B cell (primary cell): ENCODE measurements at regions of chr16 and their contacts with region 1.

Region 1: DNA sequence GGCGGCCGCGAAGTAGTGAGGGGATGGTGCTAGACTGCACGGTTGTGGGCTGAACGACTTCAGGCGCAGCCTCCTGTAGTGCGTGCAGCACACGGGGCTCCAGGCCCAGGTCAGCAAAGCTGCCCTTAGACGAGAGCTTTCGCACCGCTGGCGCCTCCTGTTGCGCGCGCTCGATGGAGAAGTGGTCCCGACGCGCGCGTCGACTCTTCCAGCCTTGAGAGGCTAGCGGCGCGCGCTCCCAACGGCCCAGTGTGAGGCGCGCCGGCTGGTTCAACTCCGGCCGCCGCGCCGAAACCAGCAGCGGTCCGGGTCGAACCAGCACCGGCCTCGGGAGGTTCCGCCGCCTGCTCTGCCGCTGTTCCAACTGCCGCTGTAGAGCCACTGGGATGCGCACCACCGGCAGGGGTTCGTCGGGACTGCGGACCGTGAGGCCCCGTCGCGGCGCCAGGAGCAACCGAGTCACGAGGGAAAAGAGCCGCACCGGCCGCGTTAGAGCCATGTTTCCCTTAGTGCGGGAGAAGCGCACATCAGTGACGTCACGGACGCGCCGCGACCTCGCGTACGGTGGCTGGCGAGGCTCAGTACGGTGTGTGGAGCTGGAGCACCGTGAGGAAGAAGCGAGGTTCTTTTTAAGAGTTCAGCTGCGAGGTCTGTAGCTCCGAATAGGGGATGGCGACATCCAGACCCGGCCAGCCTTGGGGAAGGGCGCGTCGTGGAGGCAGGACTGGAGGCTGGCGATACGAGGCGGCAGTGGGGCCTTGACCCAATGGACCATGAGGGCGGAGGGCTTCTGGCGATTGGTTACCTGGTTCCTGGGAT is at the starts of genes DDX28 and DUS2:
- DNase-seq: peak; percentile 96
- ATAC-seq: peak; percentile 94
- H3K4me3 ChIP-seq: peak within 1 kb of the TSS; percentile 74 to 98 (median 90)
- H3K4me3 Mint-ChIP-seq: peak within 1 kb of the TSS; percentile 96
- H3K27ac ChIP-seq: peak within 1 kb of the TSS; percentile 72 to 79
- H3K27ac Mint-ChIP-seq: peak within 1 kb of the TSS; percentile 99
- H3K4me1 ChIP-seq: peaks cover 23 to 26% of the 10 kb centered on the region in 2 donors
- H3K4me1 Mint-ChIP-seq: peaks cover 27% of the 10 kb centered on the region
- H3K27me3 ChIP-seq: no peaks in the 10 kb centered on the region
- H3K27me3 Mint-ChIP-seq: no peaks in the 10 kb centered on the region
- CTCF ChIP-seq: no peak
- total RNA-seq, gene DDX28: 19.2 and 20.2 TPM in 2 replicates
- total RNA-seq, gene DUS2: 61.1 and 69.1 TPM in 2 replicates

Region 2: DNA sequence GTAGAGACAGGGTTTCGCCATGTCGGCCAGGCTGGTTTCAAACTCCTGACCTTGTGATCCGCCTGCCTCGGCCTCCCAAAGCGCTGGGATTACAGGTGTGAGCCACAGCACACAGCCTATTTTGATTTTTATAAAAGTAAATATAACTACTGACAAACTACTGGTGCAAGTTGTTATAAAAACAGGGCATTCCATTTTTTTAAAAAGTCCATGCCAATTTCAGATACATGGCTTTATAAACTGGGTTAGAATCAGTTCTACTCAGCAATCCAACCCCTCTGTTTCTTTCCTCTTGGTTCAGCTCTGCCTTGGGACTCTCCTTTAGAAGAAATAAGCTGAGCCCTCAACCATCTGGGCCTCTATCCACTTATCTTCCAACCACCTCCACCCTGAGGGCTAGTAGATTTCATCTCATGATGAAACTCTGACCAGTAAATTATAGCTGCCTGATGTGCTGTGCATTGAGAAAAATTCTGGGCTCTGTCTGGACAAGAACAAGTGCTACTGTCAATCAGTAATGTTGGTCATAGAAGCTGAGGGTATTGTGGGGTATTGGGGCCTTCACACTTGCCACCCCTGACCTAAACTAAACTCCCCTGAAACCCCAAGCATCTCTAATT is 226.7 kb before region 1 on chr16:
- CTCF ChIA-PET with region 1: no interaction called
- POLR2A ChIA-PET with region 1: no interaction called
- intact Hi-C with region 1: no loop called
- DNase-seq: no peak
- ATAC-seq: no peak
- H3K4me3 ChIP-seq: no peak overlapping the region
- H3K4me3 Mint-ChIP-seq: no peak overlapping the region
- H3K27ac ChIP-seq: no peak overlapping the region
- H3K27ac Mint-ChIP-seq: peak overlapping the region; percentile 22
- H3K4me1 ChIP-seq: peaks cover 16 to 17% of the 10 kb centered on the region in 2 donors
- H3K4me1 Mint-ChIP-seq: peaks cover 43% of the 10 kb centered on the region
- H3K27me3 ChIP-seq: no peaks in the 10 kb centered on the region
- H3K27me3 Mint-ChIP-seq: no peaks in the 10 kb centered on the region
- CTCF ChIP-seq: no peak

Region 3: GRCh38 chr16:67892899-67893742 is 129.8 kb before region 1 on chr16 and contains the start of gene PSKH1:
- CTCF ChIA-PET with region 1: no interaction called
- POLR2A ChIA-PET with region 1: no interaction called
- intact Hi-C with region 1: loop called (anchors 1 kb)
- DNase-seq: peak; percentile 95
- ATAC-seq: peak; percentile 99
- H3K4me3 ChIP-seq: peak within 1 kb of the TSS; percentile 61 to 92 (median 76)
- H3K4me3 Mint-ChIP-seq: peak within 1 kb of the TSS; percentile 90
- H3K27ac ChIP-seq: peak within 1 kb of the TSS; percentile 77 to 95
- H3K27ac Mint-ChIP-seq: peak within 1 kb of the TSS; percentile 85
- H3K4me1 ChIP-seq: peaks cover 16 to 18% of the 10 kb centered on the region in 2 donors
- H3K4me1 Mint-ChIP-seq: peaks cover 31% of the 10 kb centered on the region
- H3K27me3 ChIP-seq: no peaks in the 10 kb centered on the region
- H3K27me3 Mint-ChIP-seq: no peaks in the 10 kb centered on the region
- CTCF ChIP-seq: no peak
- total RNA-seq, gene PSKH1: 29.1 TPM in 2 replicates

Region 4: DNA sequence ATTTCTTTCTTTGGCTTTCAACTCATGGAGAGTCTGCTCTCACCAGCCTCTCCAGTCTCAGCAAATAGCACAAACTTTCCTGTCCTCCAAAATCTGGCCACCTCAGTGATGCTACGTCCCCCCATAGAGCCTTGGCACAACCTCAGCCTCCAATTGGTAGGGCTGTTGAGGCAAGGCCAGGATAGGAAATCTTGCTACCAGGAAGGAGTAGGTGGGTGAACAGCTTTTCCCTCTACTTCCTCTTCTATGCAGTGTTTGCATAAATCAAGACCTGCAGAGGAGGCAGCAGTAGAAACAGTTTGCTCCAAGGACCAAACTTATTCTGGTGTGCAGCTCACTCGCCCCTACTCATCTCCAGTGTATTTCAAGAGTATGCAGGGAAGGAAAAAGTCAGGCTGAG is 22.9 kb before region 1 on chr16:
- CTCF ChIA-PET with region 1: interaction called, 19 read pairs
- POLR2A ChIA-PET with region 1: interaction called, 37 read pairs
- intact Hi-C with region 1: no loop called
- DNase-seq: peak; percentile 60
- ATAC-seq: peak; percentile 19
- H3K4me3 ChIP-seq: peak overlapping the region in 4 of 5 experiments; percentile 21 to 85 (median 58)
- H3K4me3 Mint-ChIP-seq: peak overlapping the region; percentile 91
- H3K27ac ChIP-seq: peak overlapping the region; percentile 73 to 76
- H3K27ac Mint-ChIP-seq: peak overlapping the region; percentile 94
- H3K4me1 ChIP-seq: peaks cover 57 to 72% of the 10 kb centered on the region in 2 donors
- H3K4me1 Mint-ChIP-seq: peaks cover 66% of the 10 kb centered on the region
- H3K27me3 ChIP-seq: no peaks in the 10 kb centered on the region
- H3K27me3 Mint-ChIP-seq: no peaks in the 10 kb centered on the region
- CTCF ChIP-seq: no peak

Region 5: GRCh38 chr16:68005786-68006286 is 17.1 kb before region 1 on chr16:
- CTCF ChIA-PET with region 1: interaction called, 24 read pairs
- POLR2A ChIA-PET with region 1: interaction called, 37 read pairs
- intact Hi-C with region 1: loop called (anchors 2 kb)
- DNase-seq: peak; percentile 76
- ATAC-seq: peak; percentile 99
- H3K4me3 ChIP-seq: peak overlapping the region in 1 of 5 experiments; percentile 46
- H3K4me3 Mint-ChIP-seq: peak overlapping the region; percentile 69
- H3K27ac ChIP-seq: peak overlapping the region; percentile 72 to 89
- H3K27ac Mint-ChIP-seq: peak overlapping the region; percentile 96
- H3K4me1 ChIP-seq: peaks cover 29 to 39% of the 10 kb centered on the region in 2 donors
- H3K4me1 Mint-ChIP-seq: peaks cover 35% of the 10 kb centered on the region
- H3K27me3 ChIP-seq: no peaks in the 10 kb centered on the region
- H3K27me3 Mint-ChIP-seq: no peaks in the 10 kb centered on the region
- CTCF ChIP-seq: no peak

Region 6: GRCh38 chr16:68074850-68075555 is 52.1 kb after region 1 on chr16:
- CTCF ChIA-PET with region 1: no interaction called
- POLR2A ChIA-PET with region 1: no interaction called
- intact Hi-C with region 1: no loop called
- DNase-seq: peak; percentile 93
- ATAC-seq: peak; percentile 86
- H3K4me3 ChIP-seq: peak overlapping the region in 4 of 5 experiments; percentile 11 to 48 (median 30)
- H3K4me3 Mint-ChIP-seq: peak overlapping the region; percentile 85
- H3K27ac ChIP-seq: peak overlapping the region; percentile 77 to 91
- H3K27ac Mint-ChIP-seq: peak overlapping the region; percentile 94
- H3K4me1 ChIP-seq: peaks cover 88 to 99% of the 10 kb centered on the region in 2 donors
- H3K4me1 Mint-ChIP-seq: peaks cover 87% of the 10 kb centered on the region
- H3K27me3 ChIP-seq: no peaks in the 10 kb centered on the region
- H3K27me3 Mint-ChIP-seq: no peaks in the 10 kb centered on the region
- CTCF ChIP-seq: no peak

Region 7: DNA sequence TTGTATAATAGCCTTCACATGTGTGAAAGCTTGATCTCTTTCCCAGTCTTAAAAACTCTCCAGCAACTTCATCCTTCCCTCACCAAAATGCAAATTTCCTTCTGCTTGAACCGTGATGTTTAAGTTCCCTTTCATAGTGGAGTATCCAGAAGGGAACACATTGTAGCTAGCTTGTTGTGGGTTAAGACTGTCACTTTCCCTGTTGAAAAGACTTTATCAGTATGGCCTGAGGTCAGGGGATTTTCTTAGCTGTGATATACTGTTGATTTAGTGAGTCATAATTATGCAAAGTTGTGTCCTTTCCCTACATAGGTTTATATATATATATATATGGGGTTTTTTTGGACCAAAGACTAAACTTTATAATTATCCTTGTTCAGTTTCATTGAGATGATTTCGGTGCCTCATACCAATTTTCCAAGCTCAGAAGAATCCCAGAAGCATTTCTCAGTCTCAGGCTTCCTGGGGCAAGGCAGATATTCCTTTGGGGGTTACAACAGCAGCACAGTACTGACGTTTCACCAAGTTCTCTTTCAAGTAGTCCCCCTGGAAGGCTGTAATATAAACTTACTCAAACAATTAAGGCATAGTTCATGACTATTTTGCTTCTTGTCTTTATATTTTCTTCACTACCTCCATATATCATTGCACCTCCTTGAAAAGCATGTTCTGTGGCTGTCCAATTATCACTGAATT is 177.3 kb after region 1 on chr16:
- CTCF ChIA-PET with region 1: no interaction called
- POLR2A ChIA-PET with region 1: no interaction called
- intact Hi-C with region 1: no loop called
- DNase-seq: no peak
- ATAC-seq: no peak
- H3K4me3 ChIP-seq: no peak overlapping the region
- H3K4me3 Mint-ChIP-seq: no peak overlapping the region
- H3K27ac ChIP-seq: peak overlapping the region in 1 of 2 donors; percentile 23
- H3K27ac Mint-ChIP-seq: no peak overlapping the region
- H3K4me1 ChIP-seq: no peaks in the 10 kb centered on the region
- H3K4me1 Mint-ChIP-seq: peaks cover 5% of the 10 kb centered on the region
- H3K27me3 ChIP-seq: no peaks in the 10 kb centered on the region
- H3K27me3 Mint-ChIP-seq: no peaks in the 10 kb centered on the region
- CTCF ChIP-seq: no peak